RWPE1 (cell line): ENCODE measurements at regions of chr19 and their contacts with region 1.

Region 1: DNA sequence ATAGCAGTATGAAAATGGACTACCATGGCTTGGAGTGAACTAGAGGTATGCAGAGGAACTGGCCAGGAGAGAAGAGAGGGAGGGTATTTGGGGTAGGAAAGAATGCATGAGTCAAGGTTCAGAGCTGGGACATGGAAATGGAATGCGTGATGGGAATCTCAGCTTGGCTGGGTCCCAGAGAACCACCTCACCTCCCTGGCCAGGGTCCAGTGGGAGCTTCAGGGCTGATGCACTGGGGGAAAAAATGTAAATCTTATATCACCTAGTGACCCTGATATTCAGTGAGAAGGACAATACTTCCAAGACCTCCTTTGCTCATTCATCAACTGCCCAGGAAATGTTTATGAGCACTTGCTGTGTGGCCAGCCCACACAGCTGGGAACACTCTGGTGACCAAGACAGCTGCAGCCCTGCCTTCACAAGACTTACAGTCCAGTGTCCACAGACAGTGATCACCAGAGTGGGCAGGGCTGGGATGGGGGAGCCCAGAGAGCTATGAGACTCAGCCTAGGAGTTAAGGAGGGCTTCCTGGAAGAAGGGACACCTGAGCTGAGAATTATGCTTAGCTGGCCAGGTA is 12.8 kb downstream of the IGSF23 start:
- DNase-seq: peak; percentile 91
- H3K27ac ChIP-seq: peak overlapping the region; percentile 75
- CTCF ChIP-seq: no peak

Region 2: GRCh38 chr19:44577566-44577874 is 48.6 kb before region 1 on chr19:
- CTCF ChIA-PET with region 1: no interaction called
- POLR2A ChIA-PET with region 1: no interaction called
- DNase-seq: no peak
- H3K27ac ChIP-seq: no peak overlapping the region
- CTCF ChIP-seq: no peak

Region 3: DNA sequence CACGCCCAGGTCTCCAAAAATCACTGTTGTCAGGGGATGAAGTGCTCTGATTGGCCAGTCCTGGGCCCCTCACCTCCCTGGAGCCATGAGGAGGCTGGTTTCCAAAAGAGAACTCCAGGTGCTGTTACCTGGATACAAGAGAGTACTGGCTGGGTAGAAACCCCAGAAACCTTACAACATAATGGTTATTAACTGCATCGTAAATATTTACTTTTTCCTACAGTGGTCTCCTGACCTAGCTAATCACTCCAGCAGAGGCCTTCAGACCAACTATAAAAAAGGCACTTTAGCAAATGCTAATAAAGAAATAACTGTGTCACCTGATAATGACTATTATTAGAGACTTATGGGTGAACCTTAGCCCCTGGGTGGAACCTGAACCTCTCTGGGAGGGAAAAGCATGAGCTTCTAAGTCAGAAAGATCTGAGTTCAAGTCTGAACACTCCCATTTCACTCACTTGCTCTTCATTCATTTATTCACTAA is 14.3 kb before region 1 on chr19:
- CTCF ChIA-PET with region 1: no interaction called
- POLR2A ChIA-PET with region 1: no interaction called
- DNase-seq: no peak
- H3K27ac ChIP-seq: no peak overlapping the region
- CTCF ChIP-seq: no peak

Region 4: DNA sequence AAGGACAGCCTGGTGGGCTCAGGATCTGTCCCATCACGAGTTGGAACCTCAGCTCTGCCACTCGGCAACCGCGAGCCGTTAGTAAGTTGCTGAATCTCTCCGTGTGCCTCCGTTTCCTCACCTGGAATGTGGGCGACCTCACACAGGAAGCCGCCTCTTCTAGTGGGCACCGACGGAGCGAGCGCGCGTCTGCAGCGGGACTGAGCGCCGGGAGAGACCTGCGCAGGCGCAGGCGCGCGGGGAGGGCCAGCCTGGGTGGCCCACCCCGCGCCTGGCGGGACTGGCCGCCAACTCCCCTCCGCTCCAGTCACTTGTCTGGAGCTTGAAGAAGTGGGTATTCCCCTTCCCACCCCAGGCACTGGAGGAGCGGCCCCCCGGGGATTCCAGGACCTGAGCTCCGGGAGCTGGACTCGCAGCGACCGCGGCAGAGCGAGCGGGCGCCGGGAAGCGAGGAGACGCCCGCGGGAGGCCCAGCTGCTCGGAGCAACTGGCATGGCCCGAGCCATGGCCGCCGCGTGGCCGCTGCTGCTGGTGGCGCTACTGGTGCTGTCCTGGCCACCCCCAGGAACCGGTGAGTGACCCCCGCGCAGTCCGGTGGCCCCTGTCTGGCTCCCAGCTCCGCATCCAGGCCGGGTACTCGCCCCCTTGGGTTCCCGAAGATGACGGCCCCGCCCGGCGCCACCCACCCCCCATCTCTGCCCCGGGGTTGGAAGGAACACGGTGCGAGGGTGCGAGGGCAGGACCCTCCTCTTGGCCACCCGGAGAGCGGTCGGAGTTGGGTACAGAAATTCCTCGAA is 17.7 kb after region 1 on chr19 and contains the start of gene PVR:
- CTCF ChIA-PET with region 1: interaction called, 5 read pairs
- POLR2A ChIA-PET with region 1: interaction called, 12 read pairs
- DNase-seq: peak; percentile 89
- H3K27ac ChIP-seq: peak within 1 kb of the TSS; percentile 90
- CTCF ChIP-seq: no peak

Region 5: DNA sequence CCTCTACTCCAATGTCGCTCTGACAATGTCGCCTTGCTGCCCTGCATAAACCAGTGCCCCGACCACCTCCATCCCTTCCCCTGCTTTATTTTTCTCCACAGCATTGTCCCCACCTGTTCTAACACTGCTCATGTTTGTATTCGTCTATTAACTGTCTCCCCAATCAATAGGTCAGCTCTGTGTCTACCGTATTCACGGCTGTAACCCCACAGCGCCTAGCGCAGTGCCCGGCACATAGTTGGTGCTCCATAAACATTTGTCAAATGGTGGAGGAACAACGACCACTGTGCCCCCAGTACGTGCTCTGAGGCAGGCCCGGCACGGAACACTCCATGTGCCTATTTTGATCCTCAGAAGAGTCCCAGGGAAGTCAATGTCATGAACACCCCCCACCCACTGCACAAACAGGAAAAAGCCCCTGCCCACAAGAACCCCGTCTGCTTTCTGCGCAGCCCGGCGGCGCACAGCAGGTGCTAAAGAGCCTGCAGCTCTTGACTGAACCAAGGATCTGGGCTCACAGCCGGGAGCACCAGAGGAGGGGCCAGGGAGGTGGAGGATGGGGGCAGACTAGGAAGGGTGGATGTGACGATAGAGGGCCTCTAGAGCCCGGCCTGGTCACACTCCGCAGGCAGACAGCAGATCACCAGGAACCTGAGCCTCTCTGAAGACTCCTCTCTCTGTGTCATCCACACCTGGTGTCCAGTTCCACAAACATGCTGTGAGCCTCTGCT is 71.0 kb after region 1 on chr19:
- CTCF ChIA-PET with region 1: no interaction called
- POLR2A ChIA-PET with region 1: no interaction called
- DNase-seq: no peak
- H3K27ac ChIP-seq: peak overlapping the region; percentile 82
- CTCF ChIP-seq: no peak